HepG2 (cell line): ENCODE measurements at regions of chr5 and their contacts with region 1.

Region 1: GRCh38 chr5:148730943-148731861 is 76.9 kb upstream of the HTR4 start:
- DNase-seq: peak; percentile 79
- ATAC-seq: peak; percentile 96
- H3K4me3 ChIP-seq: no peak overlapping the region
- H3K27ac ChIP-seq: no peak overlapping the region
- H3K4me1 ChIP-seq: 0 out of 2 replicates have a peak, but pooled peaks cover 4% of the 10 kb centered on the region
- H3K27me3 ChIP-seq: no peaks in the 10 kb centered on the region
- CTCF ChIP-seq: peak; percentile 86
- EP300 ChIP-seq: no peak
- POLR2A ChIP-seq: no peak
- RAD21 ChIP-seq: peak; percentile 42; the same call in 1 of the 2 replicates

Region 2: DNA sequence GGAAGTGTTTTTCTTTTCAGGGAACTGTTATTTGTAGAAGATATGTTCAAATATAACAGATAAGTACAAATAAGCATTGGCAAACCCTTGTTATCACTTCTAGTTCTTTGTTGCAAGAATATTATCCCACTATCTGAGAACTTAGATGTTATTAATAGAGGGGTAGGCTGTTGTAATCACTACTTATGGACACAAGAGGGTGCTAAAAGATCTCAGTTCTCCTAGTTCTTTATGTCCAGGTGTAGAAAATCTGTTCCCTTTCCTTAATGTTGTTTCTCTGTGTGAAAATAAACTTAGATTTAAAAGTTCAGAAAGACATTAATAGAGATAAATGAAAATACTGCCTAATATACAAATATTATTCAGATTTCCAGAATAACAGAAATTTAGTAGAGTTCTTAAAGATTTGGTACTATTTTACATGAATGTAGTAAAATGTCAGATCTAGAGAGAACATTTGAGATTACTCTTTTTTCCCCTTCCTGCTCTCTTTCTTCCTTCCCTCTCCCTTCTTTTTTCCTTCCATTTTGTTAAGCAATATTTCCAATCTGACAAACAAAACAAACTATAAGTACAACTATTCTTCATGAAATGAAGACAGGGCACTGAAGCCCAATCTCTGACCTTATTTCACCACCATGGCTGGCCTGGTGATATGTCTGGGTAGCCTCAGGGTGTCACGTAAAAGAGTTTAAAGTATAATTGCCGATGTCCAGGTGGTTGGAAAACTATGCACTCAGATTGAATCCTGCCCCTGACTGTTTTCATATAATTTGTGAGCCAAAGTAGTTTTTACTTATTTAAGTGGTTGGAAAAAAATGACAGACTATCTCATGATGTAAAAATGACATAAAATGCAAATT is 781.3 kb before region 1 on chr5:
- CTCF ChIA-PET with region 1: interaction called, 17 read pairs
- POLR2A ChIA-PET with region 1: no interaction called
- in situ Hi-C with region 1: no loop called
- intact Hi-C with region 1: loop called (anchors 5 kb)
- DNase-seq: peak; percentile 37
- ATAC-seq: peak; percentile 73
- H3K4me3 ChIP-seq: no peak overlapping the region
- H3K27ac ChIP-seq: no peak overlapping the region
- H3K4me1 ChIP-seq: no peaks in the 10 kb centered on the region
- H3K27me3 ChIP-seq: no peaks in the 10 kb centered on the region
- CTCF ChIP-seq: peak; percentile 65
- EP300 ChIP-seq: no peak
- POLR2A ChIP-seq: no peak
- RAD21 ChIP-seq: no peak

Region 3: DNA sequence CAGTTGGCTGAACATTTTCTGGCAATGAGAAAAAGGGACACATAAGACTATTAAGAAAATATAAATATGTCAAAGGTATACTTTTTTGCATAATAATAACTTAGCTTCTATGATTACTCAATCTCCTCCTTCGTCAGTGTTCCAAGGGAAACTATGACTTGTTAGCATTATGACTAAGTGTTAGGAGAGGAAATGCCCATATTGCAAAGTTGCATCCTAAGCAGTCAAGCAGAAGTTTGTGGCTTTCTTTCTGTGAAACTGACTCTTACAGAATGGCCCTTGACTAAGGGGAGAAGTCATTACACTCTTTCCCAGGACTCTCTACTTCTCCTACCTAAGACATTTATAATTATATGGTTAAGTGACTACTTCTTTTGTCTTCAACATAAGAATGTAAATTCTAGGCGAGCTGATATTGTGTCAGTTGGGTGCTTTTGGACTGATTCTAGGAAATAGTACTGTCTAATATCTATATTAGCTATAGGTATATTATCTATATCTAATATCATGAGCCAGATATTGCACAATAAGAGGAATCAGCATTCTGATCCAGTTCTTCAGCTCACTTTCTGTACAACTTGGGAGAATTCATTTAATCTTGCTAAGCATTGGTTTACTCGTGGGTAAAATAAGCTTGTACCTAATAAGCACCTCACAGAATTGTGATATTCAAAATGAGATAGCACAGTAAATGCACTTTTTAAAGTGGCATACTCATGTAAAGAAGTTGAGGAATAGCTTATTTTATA is 544.8 kb before region 1 on chr5:
- CTCF ChIA-PET with region 1: no interaction called
- POLR2A ChIA-PET with region 1: no interaction called
- in situ Hi-C with region 1: loop called (anchors 10 kb)
- intact Hi-C with region 1: no loop called
- DNase-seq: no peak
- ATAC-seq: no peak
- H3K4me3 ChIP-seq: no peak overlapping the region
- H3K27ac ChIP-seq: no peak overlapping the region
- H3K4me1 ChIP-seq: no peaks in the 10 kb centered on the region
- H3K27me3 ChIP-seq: no peaks in the 10 kb centered on the region
- CTCF ChIP-seq: no peak
- EP300 ChIP-seq: no peak
- POLR2A ChIP-seq: no peak
- RAD21 ChIP-seq: no peak

Region 4: GRCh38 chr5:148443998-148444397 is 287.2 kb before region 1 on chr5:
- CTCF ChIA-PET with region 1: interaction called, 21 read pairs
- POLR2A ChIA-PET with region 1: no interaction called
- in situ Hi-C with region 1: loop called (anchors 5 kb)
- intact Hi-C with region 1: loop called (anchors 1 kb)
- DNase-seq: peak; percentile 65
- ATAC-seq: peak; percentile 91
- H3K4me3 ChIP-seq: no peak overlapping the region
- H3K27ac ChIP-seq: no peak overlapping the region
- H3K4me1 ChIP-seq: no peaks in the 10 kb centered on the region
- H3K27me3 ChIP-seq: no peaks in the 10 kb centered on the region
- CTCF ChIP-seq: peak; percentile 72
- EP300 ChIP-seq: no peak
- POLR2A ChIP-seq: no peak
- RAD21 ChIP-seq: no peak

Region 5: DNA sequence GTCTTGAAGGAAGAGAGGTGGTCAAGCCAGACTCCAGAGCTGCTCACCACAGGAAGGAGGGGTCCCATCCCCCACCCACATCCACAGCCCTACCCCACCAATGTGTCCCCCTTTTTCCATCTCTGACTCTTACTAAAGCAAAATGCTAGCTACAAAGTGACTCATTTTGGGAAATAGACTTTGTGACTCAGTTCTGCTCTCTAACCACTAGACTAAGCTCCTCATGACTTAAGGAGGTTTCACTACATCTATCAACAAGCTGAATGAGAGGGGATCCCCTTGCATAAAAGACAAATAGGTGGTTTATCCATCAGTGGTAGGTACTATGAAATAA is 60.1 kb after region 1 on chr5:
- CTCF ChIA-PET with region 1: no interaction called
- POLR2A ChIA-PET with region 1: no interaction called
- in situ Hi-C with region 1: no loop called
- intact Hi-C with region 1: no loop called
- DNase-seq: no peak
- ATAC-seq: no peak
- H3K4me3 ChIP-seq: no peak overlapping the region
- H3K27ac ChIP-seq: no peak overlapping the region
- H3K4me1 ChIP-seq: no peaks in the 10 kb centered on the region
- H3K27me3 ChIP-seq: no peaks in the 10 kb centered on the region
- CTCF ChIP-seq: no peak
- EP300 ChIP-seq: no peak
- POLR2A ChIP-seq: no peak
- RAD21 ChIP-seq: no peak

Region 6: GRCh38 chr5:149035372-149035790 is 304.2 kb after region 1 on chr5:
- CTCF ChIA-PET with region 1: interaction called, 17 read pairs
- POLR2A ChIA-PET with region 1: no interaction called
- in situ Hi-C with region 1: loop called (anchors 5 kb)
- intact Hi-C with region 1: loop called (anchors 1 kb)
- DNase-seq: peak; percentile 53
- ATAC-seq: peak; percentile 96
- H3K4me3 ChIP-seq: no peak overlapping the region
- H3K27ac ChIP-seq: no peak overlapping the region
- H3K4me1 ChIP-seq: no peaks in the 10 kb centered on the region
- H3K27me3 ChIP-seq: no peaks in the 10 kb centered on the region
- CTCF ChIP-seq: peak; percentile 90
- EP300 ChIP-seq: no peak
- POLR2A ChIP-seq: no peak
- RAD21 ChIP-seq: no peak

Region 7: GRCh38 chr5:149268928-149269557 is 537.8 kb after region 1 on chr5:
- CTCF ChIA-PET with region 1: interaction called, 3 read pairs
- POLR2A ChIA-PET with region 1: no interaction called
- in situ Hi-C with region 1: loop called (anchors 10 kb)
- intact Hi-C with region 1: loop called (anchors 5 kb)
- DNase-seq: peak; percentile 49
- ATAC-seq: no peak
- H3K4me3 ChIP-seq: no peak overlapping the region
- H3K27ac ChIP-seq: no peak overlapping the region
- H3K4me1 ChIP-seq: peaks cover 29% of the 10 kb centered on the region
- H3K27me3 ChIP-seq: peaks cover 7 to 23% of the 10 kb centered on the region in 2 experiments
- CTCF ChIP-seq: peak; percentile 71
- EP300 ChIP-seq: no peak
- POLR2A ChIP-seq: no peak
- RAD21 ChIP-seq: no peak